ENCODE measurements at regions of chr12 and their contacts with region 1.

Region 1: DNA sequence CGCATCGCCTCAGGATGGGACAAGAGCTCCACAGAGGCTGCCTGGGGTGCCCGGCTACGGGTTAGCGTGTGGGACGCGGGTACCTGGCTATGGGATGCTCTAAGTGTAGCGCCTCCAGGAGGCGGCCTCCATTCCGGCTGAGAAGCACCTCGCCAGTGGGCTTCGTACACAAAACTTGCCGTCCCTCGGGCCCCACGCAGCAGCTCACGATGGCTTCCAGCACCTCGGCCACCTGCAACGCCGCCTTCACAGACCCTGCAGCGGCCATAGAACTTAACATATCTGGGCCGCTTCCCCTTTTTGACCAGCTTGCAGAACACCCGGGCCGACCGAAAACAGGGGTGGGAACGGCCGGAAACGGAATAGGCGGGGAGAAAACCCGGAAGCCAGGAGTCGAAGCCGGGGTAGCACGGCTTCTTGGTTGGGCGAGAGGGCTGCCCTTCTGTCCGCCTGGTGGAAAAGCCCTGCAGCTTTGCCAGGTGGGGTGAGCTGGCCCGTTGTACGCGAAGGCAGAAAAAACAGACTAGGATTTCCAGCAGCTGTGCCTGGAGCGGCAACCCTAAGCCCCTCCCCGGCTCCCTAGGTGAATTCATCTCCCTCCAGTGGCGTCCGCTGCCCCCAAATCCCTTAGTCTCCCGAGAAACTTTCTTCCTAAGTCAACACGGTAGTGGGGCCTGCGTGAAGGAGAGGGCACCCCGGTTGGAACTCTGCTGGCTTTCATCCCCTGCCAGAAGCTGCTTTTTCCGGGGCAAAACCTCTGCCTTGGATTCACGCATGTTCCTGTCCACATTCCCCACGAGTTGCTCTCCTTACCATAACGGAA is at the start of gene BBS10:
- DNase-seq: peak; percentile 92
- ATAC-seq: peak; percentile 93
- H3K4me3 Mint-ChIP-seq: peak within 1 kb of the TSS; percentile 88
- H3K27ac Mint-ChIP-seq: peak within 1 kb of the TSS; percentile 94
- H3K4me1 Mint-ChIP-seq: peaks cover 21% of the 10 kb centered on the region
- H3K27me3 Mint-ChIP-seq: no peaks in the 10 kb centered on the region
- total RNA-seq, gene BBS10: 3.5 to 4.0 TPM

Region 2: DNA sequence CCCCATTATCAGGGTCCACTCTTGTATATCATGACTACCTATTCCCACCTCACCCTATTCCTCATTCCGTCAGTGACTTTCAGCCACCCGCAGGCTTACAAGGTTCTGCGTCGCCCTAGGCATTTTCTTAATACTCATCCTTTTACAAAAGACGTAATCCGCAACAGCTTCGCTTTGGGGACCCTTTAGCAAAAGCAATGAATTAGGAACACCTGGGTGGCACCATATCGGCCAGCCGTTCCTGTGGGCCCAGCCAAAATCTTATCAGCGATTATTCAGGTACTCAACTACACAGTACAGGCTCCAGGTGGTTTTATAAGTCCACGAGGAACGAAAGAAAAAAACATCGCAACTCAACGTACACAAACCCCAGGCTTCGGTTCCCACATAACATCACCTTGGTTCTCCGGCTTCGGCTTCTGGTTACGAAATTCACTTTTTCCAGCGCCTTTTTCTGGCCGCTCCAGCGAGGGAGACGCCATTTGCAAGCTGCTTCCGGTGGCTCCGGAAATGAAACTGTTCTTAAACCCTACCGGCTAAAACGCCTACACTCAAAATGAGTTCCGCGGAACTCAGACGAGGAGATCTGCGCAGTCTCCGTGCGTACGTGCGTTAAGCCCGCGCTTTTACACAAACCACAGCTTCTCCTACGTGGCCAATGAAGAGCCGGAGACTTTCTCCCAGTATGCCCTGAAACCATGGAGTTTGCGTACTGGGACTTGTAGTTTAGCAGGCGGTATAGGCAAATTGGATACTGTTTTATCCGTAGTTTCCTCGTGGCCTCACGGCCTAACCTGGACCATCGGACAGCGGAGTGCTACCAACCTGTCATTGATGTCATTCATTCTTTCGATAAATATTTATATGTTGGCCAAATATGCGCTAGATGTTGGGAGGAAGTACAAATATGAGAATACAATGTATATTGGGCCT is 836.9 kb before region 1 on chr12 and contains the start of gene KRR1:
- CTCF ChIA-PET with region 1: interaction called, 3 read pairs
- POLR2A ChIA-PET with region 1: no interaction called
- intact Hi-C with region 1: loop called in 1 of 2 experiments (anchors 1 kb)
- DNase-seq: peak; percentile 94
- ATAC-seq: peak; percentile 96
- H3K4me3 Mint-ChIP-seq: peak within 1 kb of the TSS; percentile 100
- H3K27ac Mint-ChIP-seq: peak within 1 kb of the TSS; percentile 99
- H3K4me1 Mint-ChIP-seq: peaks cover 33% of the 10 kb centered on the region
- H3K27me3 Mint-ChIP-seq: no peaks in the 10 kb centered on the region
- total RNA-seq, gene KRR1: 122 to 147 TPM

Region 3: DNA sequence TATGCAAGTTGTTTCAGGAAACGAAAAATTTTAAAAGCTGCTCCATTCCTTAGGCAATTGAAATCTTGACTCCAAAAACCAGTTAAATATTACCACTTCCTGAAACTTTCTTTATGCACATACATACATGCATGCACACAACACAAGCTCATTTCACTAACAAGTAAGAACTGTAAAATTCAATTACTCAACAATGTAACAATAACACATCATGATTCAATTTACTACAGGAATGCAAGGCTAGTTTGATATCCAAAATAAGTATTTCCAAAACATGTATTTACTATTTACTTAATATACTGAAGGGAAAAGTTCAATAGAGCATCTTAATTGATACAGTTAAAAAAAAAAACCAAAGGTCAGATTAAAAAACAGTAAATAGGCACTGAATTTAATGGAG is 283.4 kb before region 1 on chr12:
- CTCF ChIA-PET with region 1: no interaction called
- POLR2A ChIA-PET with region 1: no interaction called
- intact Hi-C with region 1: loop called in 1 of 2 experiments (anchors 5 kb)
- DNase-seq: no peak
- ATAC-seq: no peak
- H3K4me3 Mint-ChIP-seq: no peak overlapping the region
- H3K27ac Mint-ChIP-seq: peak overlapping the region; percentile 38
- H3K4me1 Mint-ChIP-seq: peaks cover 42% of the 10 kb centered on the region
- H3K27me3 Mint-ChIP-seq: no peaks in the 10 kb centered on the region

Region 4: GRCh38 chr12:76277480-76277879 is 70.8 kb before region 1 on chr12:
- CTCF ChIA-PET with region 1: no interaction called
- POLR2A ChIA-PET with region 1: interaction called, 3 read pairs
- intact Hi-C with region 1: loop called (anchors 1 to 2 kb)
- DNase-seq: no peak
- ATAC-seq: no peak
- H3K4me3 Mint-ChIP-seq: no peak overlapping the region
- H3K27ac Mint-ChIP-seq: no peak overlapping the region
- H3K4me1 Mint-ChIP-seq: peaks cover 14% of the 10 kb centered on the region
- H3K27me3 Mint-ChIP-seq: peaks cover 33% of the 10 kb centered on the region

Region 5: GRCh38 chr12:76299536-76300296 is 48.6 kb before region 1 on chr12:
- CTCF ChIA-PET with region 1: no interaction called
- POLR2A ChIA-PET with region 1: no interaction called
- intact Hi-C with region 1: no loop called
- DNase-seq: no peak
- ATAC-seq: no peak
- H3K4me3 Mint-ChIP-seq: no peak overlapping the region
- H3K27ac Mint-ChIP-seq: no peak overlapping the region
- H3K4me1 Mint-ChIP-seq: no peaks in the 10 kb centered on the region
- H3K27me3 Mint-ChIP-seq: peaks cover 4% of the 10 kb centered on the region

Region 6: GRCh38 chr12:76374386-76375020 is 26.2 kb after region 1 on chr12:
- CTCF ChIA-PET with region 1: no interaction called
- POLR2A ChIA-PET with region 1: no interaction called
- intact Hi-C with region 1: no loop called
- DNase-seq: no peak
- ATAC-seq: peak; percentile 80
- H3K4me3 Mint-ChIP-seq: no peak overlapping the region
- H3K27ac Mint-ChIP-seq: no peak overlapping the region
- H3K4me1 Mint-ChIP-seq: peaks cover 7% of the 10 kb centered on the region
- H3K27me3 Mint-ChIP-seq: no peaks in the 10 kb centered on the region

Region 7: DNA sequence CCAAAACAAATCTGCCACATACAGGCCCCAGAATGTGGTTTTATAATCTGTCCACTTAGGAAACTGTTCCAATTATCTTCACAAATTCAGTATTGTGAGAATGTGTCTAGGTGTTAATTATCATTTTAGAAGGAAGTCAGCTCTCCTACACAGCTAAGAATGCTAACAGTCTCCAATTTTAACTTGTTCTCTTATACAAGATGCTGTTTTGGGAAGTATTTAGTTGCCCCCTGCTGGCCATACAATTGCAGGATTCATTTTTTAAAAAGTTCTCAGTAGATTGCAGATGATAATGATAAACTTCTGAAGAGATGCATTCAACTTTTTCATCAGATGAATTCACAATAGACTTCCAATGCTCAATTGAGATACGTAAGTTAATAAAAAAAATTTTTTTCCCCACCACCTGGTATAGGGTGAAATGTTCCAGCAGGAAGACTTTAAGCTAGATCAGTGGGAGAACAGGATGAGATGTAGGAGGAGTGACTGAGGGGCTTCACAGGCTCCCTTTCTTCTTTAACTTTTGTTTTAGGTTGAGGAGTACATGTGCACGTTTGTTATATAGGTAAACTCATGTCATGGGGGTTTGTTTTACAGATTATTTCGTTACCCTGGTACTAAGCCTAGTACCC is 238.6 kb after region 1 on chr12:
- CTCF ChIA-PET with region 1: interaction called, 4 read pairs
- POLR2A ChIA-PET with region 1: no interaction called
- intact Hi-C with region 1: loop called in 1 of 2 experiments (anchors 10 kb)
- DNase-seq: peak; percentile 44
- ATAC-seq: no peak
- H3K4me3 Mint-ChIP-seq: no peak overlapping the region
- H3K27ac Mint-ChIP-seq: no peak overlapping the region
- H3K4me1 Mint-ChIP-seq: no peaks in the 10 kb centered on the region
- H3K27me3 Mint-ChIP-seq: no peaks in the 10 kb centered on the region

Region 8: DNA sequence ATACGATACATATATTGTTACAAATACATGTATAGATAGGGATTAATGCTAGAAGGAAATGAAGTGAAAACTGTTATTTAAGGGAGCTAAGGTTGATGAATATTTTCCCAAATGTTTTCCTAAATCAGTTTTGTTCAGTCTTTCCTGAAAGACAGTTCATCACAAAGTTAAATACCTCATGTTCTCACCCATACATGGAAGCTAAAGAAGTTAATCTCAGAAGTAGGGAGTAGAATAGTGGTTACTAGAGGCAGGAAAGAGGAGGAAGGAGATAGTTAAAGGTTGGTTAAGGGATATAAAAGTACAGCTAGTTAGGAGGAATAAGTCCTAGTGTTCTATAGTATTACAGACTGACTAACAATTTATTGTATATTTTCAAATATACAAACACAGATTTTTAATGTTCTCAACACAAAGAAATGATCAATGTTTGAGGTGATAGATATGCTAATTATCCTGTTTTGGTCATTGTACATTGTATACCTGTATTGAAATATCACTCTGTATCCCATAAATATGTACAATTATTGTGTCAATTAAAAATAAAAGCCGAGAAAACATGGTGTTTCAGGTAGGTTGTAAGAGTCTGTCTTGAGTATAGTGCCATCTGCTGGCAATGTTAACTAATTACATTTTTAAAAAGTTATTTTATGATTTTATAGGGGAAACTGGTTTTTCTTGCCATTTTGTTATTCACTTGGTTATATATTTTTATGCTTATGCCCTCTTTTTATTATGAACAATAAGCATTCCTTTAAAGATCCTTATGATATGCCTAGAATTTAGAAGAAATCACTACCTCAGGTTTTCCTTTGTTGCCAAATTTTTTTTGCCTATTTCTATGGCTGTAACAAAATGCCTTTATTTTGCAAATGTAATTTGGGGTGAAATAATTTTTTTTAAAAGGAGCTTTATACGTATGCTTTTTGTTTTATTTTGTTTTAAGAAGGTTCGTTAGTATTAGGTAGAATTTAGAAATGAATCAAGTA is 442.6 kb after region 1 on chr12:
- CTCF ChIA-PET with region 1: no interaction called
- POLR2A ChIA-PET with region 1: no interaction called
- intact Hi-C with region 1: no loop called
- DNase-seq: no peak
- ATAC-seq: no peak
- H3K4me3 Mint-ChIP-seq: no peak overlapping the region
- H3K27ac Mint-ChIP-seq: no peak overlapping the region
- H3K4me1 Mint-ChIP-seq: peaks cover 22% of the 10 kb centered on the region
- H3K27me3 Mint-ChIP-seq: no peaks in the 10 kb centered on the region

Measured in activated CD4-positive, alpha-beta T cell treated with anti-CD3 and anti-CD28 coated beads for 36 hours (primary cell).